Panc1 (cell line): ENCODE measurements at regions of chr6 and their contacts with region 1.

Region 1: GRCh38 chr6:166989427-166990032 is 9.7 kb upstream of the CEP43 start:
- DNase-seq: no peak
- ATAC-seq: peak; percentile 75
- H3K4me3 ChIP-seq: no peak overlapping the region
- H3K27ac ChIP-seq: no peak overlapping the region
- H3K4me1 ChIP-seq: no peaks in the 10 kb centered on the region
- H3K27me3 ChIP-seq: no peaks in the 10 kb centered on the region
- CTCF ChIP-seq: peak; percentile 76

Region 2: DNA sequence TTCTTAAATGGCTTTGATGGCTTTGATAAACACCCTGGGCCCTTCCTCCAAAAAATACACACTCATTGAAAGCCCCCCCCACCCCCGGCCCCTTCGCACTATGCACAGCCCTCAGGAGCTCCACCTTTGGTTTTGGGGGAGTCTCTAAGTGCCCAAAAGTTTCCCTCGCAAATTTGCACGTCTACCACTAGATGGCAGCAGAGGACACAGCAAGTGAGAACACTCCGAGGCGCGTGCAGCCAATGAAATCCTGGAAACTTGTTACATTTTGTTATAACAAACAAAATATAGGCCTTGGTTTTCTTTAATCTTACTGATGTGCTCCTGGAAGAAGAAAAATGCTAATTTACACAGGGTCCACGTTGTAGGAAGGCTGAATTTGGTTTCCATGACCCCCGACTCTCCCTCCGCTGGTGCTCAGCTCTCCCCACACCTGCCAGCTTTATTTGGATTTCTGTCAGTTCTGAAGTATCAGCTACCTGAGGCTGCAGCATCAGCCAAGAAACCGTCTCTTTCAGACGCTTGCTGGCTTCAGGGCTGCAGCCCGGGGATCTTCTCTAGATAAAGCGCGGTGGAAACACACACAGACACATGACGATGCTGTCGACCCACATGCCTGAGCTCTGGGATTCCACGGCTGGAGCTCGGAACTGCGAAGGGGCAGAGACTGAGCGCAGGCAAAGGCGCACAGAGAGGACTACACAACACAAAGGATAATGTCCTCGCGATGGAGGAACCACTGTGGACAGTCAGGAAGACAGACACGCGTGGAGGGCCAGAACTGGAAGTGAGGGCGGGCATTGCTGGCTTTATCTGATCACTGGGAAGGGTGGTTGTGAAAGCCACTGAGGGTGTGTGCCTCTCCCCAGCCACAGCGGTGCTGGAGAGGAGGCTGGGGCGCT is 214.1 kb before region 1 on chr6:
- CTCF ChIA-PET with region 1: interaction called, 12 read pairs
- POLR2A ChIA-PET with region 1: no interaction called
- in situ Hi-C with region 1: no loop called
- intact Hi-C with region 1: loop called (anchors 2 kb)
- DNase-seq: peak; percentile 47
- ATAC-seq: peak; percentile 68; the same call in 1 of the 2 replicates
- H3K4me3 ChIP-seq: peak overlapping the region in 1 of 2 experiments; percentile 0; a peak in 1 of 4 replicates
- H3K27ac ChIP-seq: no peak overlapping the region
- H3K4me1 ChIP-seq: peaks cover 10% of the 10 kb centered on the region
- H3K27me3 ChIP-seq: peaks cover 13% of the 10 kb centered on the region; the same call in 1 of the 2 replicates
- CTCF ChIP-seq: peak; percentile 98

Region 3: GRCh38 chr6:167005350-167006159 is 16.0 kb after region 1 on chr6:
- CTCF ChIA-PET with region 1: no interaction called
- POLR2A ChIA-PET with region 1: interaction called, 11 read pairs
- in situ Hi-C with region 1: no loop called
- intact Hi-C with region 1: no loop called
- DNase-seq: no peak
- ATAC-seq: no peak
- H3K4me3 ChIP-seq: no peak overlapping the region
- H3K27ac ChIP-seq: no peak overlapping the region
- H3K4me1 ChIP-seq: peaks cover 9% of the 10 kb centered on the region
- H3K27me3 ChIP-seq: no peaks in the 10 kb centered on the region
- CTCF ChIP-seq: no peak